ENCODE measurements at regions of chr4 and their contacts with region 1.

Region 1: GRCh38 chr4:156968479-156968984 is 3.1 kb downstream of the PDGFC start:
- DNase-seq: peak; percentile 90
- H3K4me3 ChIP-seq: peak overlapping the region; percentile 82
- H3K27ac ChIP-seq: peak overlapping the region; percentile 83
- H3K4me1 ChIP-seq: peaks cover 23% of the 10 kb centered on the region
- H3K27me3 ChIP-seq: no peaks in the 10 kb centered on the region
- CTCF ChIP-seq: peak; percentile 94

Region 2: GRCh38 chr4:156169011-156169410 is 799.5 kb before region 1 on chr4:
- CTCF ChIA-PET with region 1: no interaction called
- POLR2A ChIA-PET with region 1: no interaction called
- intact Hi-C with region 1: loop called (anchors 10 kb)
- DNase-seq: peak; percentile 85
- H3K4me3 ChIP-seq: no peak overlapping the region
- H3K27ac ChIP-seq: no peak overlapping the region
- H3K4me1 ChIP-seq: peaks cover 15% of the 10 kb centered on the region
- H3K27me3 ChIP-seq: no peaks in the 10 kb centered on the region
- CTCF ChIP-seq: peak; percentile 77

Region 3: GRCh38 chr4:156515295-156515694 is 453.2 kb before region 1 on chr4:
- CTCF ChIA-PET with region 1: no interaction called
- POLR2A ChIA-PET with region 1: no interaction called
- intact Hi-C with region 1: loop called (anchors 1 kb)
- DNase-seq: peak; percentile 62
- H3K4me3 ChIP-seq: no peak overlapping the region
- H3K27ac ChIP-seq: peak overlapping the region; percentile 92
- H3K4me1 ChIP-seq: peaks cover 78% of the 10 kb centered on the region
- H3K27me3 ChIP-seq: no peaks in the 10 kb centered on the region
- CTCF ChIP-seq: no peak

Region 4: GRCh38 chr4:156660465-156660864 is 308.1 kb before region 1 on chr4:
- CTCF ChIA-PET with region 1: no interaction called
- POLR2A ChIA-PET with region 1: no interaction called
- intact Hi-C with region 1: loop called (anchors 10 kb)
- DNase-seq: no peak
- H3K4me3 ChIP-seq: no peak overlapping the region
- H3K27ac ChIP-seq: no peak overlapping the region
- H3K4me1 ChIP-seq: peaks cover 37% of the 10 kb centered on the region
- H3K27me3 ChIP-seq: no peaks in the 10 kb centered on the region
- CTCF ChIP-seq: no peak

Region 5: GRCh38 chr4:156901871-156902270 is 66.7 kb before region 1 on chr4:
- CTCF ChIA-PET with region 1: interaction called, 3 read pairs
- POLR2A ChIA-PET with region 1: no interaction called
- intact Hi-C with region 1: loop called (anchors 5 kb)
- DNase-seq: no peak
- H3K4me3 ChIP-seq: no peak overlapping the region
- H3K27ac ChIP-seq: no peak overlapping the region
- H3K4me1 ChIP-seq: peaks cover 13% of the 10 kb centered on the region
- H3K27me3 ChIP-seq: no peaks in the 10 kb centered on the region
- CTCF ChIP-seq: no peak

Region 6: GRCh38 chr4:157035471-157035870 is 66.9 kb after region 1 on chr4:
- CTCF ChIA-PET with region 1: no interaction called
- POLR2A ChIA-PET with region 1: no interaction called
- intact Hi-C with region 1: no loop called
- DNase-seq: no peak
- H3K4me3 ChIP-seq: no peak overlapping the region
- H3K27ac ChIP-seq: no peak overlapping the region
- H3K4me1 ChIP-seq: no peaks in the 10 kb centered on the region
- H3K27me3 ChIP-seq: no peaks in the 10 kb centered on the region
- CTCF ChIP-seq: no peak

Region 7: DNA sequence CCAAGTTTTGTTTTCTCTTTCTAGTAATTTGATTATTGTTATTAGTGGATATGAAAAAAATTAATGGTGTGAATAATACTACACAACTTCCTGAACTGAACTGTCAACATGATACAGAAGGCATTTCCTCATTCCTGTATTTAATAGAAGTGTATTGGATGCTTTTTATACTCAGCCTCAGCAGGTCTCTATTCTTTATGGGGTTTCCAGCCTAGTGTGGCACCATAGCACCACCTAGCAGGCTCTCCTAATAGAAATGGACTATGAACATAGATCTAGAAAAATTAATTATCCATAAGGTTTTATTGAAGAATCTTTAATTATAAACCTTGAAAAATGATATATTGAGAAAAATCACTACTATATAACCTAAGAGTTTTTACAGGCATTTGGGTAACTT is 159.9 kb after region 1 on chr4:
- CTCF ChIA-PET with region 1: no interaction called
- POLR2A ChIA-PET with region 1: no interaction called
- intact Hi-C with region 1: loop called (anchors 5 kb)
- DNase-seq: peak; percentile 69
- H3K4me3 ChIP-seq: no peak overlapping the region
- H3K27ac ChIP-seq: no peak overlapping the region
- H3K4me1 ChIP-seq: peaks cover 10% of the 10 kb centered on the region
- H3K27me3 ChIP-seq: no peaks in the 10 kb centered on the region
- CTCF ChIP-seq: peak; percentile 67

Measured in A673 (cell line).